ENCODE measurements at regions of chr12 and their contacts with region 1.

Region 1: DNA sequence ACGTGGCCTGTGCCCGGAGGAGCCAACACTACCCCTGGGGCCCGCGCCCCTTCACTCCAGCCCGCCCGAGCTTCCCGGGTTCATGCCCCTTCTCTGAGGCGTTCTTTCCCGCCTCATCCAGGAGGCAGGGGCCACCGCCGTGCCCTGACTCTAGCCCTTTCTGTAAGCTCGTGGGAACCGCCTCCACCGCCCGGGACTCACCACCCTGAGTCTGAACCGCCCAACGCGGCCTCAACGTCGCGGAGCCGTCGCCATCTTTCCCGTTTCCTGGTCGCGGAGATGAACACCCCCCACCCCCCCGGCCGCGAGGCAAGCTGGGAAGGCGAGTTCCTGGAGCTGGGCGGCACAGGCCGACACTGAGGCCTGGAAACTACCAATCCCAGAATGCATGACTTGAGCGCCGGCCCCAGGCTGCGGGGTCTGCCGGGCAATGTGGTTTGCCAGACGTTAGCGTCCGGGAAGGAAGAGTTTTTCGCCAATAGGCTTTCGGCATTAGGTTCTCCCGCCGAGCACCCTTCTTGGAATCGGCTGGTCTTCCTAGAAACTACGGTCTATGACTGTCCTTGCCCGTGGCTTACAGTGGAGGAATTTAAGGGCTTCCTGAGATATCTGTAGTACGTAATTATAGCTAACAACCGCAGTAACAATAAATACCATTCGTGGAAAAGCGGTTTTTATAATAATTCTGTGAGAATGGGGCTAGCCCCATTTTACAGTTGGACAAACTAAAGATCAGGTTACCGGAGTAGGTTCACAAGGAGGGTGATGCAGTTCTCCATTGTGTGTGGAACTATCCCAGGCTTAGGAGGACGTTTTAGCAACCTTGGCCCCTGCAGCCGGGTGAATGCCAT is at the start of gene DDX23:
- DNase-seq: peak; percentile 93 to 96 (median 95)
- ATAC-seq: peak; percentile 91 to 99 (median 98)
- H3K4me3 ChIP-seq: peak within 1 kb of the TSS; percentile 87 to 99 (median 99)
- H3K27ac ChIP-seq: peak within 1 kb of the TSS; percentile 72 to 80 (median 74)
- H3K4me1 ChIP-seq: peaks cover 0 to 12% (median 5%) of the 10 kb centered on the region in 4 donors
- H3K27me3 ChIP-seq: no peaks in the 10 kb centered on the region
- CTCF ChIP-seq: no peak
- POLR2A ChIP-seq: peak; percentile 45
- total RNA-seq, gene DDX23: 24.4 to 39.6 (median 31.8) TPM

Region 2: GRCh38 chr12:48936379-48936979 is 84.4 kb after region 1 on chr12:
- intact Hi-C with region 1: loop called (anchors 10 kb)
- DNase-seq: peak; percentile 67 to 71 (median 69)
- ATAC-seq: peak; percentile 76 to 87 (median 84)
- H3K4me3 ChIP-seq: no peak overlapping the region
- H3K27ac ChIP-seq: no peak overlapping the region
- H3K4me1 ChIP-seq: peaks cover 0 to 1% (median 0%) of the 10 kb centered on the region in 4 donors
- H3K27me3 ChIP-seq: no peaks in the 10 kb centered on the region
- CTCF ChIP-seq: peak; percentile 77 to 95 (median 94)
- POLR2A ChIP-seq: no peak

Region 3: GRCh38 chr12:48977315-48978281 is 125.5 kb after region 1 on chr12:
- intact Hi-C with region 1: no loop called
- DNase-seq: peak in 2 of 3 donors; percentile 70 to 72
- ATAC-seq: peak; percentile 53 to 59 (median 56)
- H3K4me3 ChIP-seq: no peak overlapping the region
- H3K27ac ChIP-seq: no peak overlapping the region
- H3K4me1 ChIP-seq: peaks cover 4 to 34% (median 16%) of the 10 kb centered on the region in 4 donors
- H3K27me3 ChIP-seq: peaks cover 8 to 59% of the 10 kb centered on the region in 2 donors
- CTCF ChIP-seq: peak; percentile 51 to 61 (median 60)
- POLR2A ChIP-seq: no peak

Region 4: DNA sequence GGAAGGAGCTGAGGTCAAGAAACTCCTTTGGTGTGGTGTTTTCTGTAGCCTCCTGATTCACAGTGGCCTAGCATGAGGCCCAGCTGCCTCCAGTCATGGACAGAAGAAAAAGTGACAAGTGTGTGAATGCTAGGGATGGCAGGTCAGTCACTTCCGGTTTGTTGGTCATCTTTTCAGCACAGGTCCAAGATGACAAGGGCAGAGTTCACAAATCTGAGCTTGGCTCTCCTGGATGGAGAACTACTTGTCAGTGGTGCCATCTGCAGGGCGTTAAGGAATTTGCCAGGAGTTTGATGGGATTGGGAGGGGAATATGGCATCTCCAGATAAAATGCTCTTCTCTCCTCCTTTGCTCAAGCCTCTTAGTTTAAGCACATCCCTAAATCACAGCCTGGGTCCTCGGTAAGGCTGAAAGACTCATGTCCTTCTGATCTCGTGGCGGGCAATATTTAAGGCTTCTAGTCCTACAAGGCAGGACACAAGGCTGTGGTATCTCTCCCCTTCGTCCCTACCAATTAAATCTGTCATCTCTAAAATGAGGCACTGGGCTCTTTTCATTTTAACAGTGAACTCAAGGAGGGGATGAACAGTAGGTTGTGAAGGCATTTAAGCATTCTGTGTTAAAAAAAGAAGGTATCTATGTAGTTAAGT is 269.1 kb after region 1 on chr12:
- intact Hi-C with region 1: no loop called
- DNase-seq: peak in 2 of 3 donors; percentile 29 to 61
- ATAC-seq: peak; percentile 97 to 99 (median 98)
- H3K4me3 ChIP-seq: no peak overlapping the region
- H3K27ac ChIP-seq: no peak overlapping the region
- H3K4me1 ChIP-seq: peaks cover 0 to 4% (median 0%) of the 10 kb centered on the region in 4 donors
- H3K27me3 ChIP-seq: no peaks in the 10 kb centered on the region
- CTCF ChIP-seq: peak; percentile 66 to 71 (median 69)
- POLR2A ChIP-seq: no peak

Measured in right lobe of liver (tissue), 6 donors.